ENCODE measurements at regions of chr12 and their contacts with region 1.

Region 1: DNA sequence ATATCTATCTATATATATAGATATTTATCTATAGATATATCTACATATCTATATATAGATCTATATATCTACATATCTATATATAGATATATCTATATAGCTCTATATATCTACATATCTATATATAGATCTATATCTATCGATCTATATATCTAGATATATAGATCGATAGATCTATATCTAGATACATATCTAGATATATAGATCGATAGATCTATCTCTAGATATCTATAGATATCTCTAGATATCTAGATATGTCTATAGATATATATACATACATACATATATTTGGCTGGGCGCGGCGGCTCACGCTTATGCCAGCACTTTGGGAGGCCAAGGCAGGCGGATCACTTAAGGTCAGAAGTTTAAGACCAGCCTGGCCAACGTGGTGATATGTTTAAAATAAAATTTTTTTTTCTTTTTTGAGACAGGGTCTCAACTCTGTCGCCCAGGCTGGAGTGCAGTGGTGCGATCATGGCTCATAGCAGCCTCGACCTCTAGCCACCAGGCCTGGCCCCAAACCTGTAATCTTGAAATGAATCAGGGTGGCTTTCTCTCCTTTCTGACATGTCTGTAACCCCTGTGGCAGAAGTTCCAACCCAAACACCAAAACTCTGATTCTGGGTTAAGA is 18.1 kb downstream of the ARPC3 start:
- DNase-seq: no peak
- ATAC-seq: no peak
- H3K4me3 Mint-ChIP-seq: no peak overlapping the region
- H3K27ac Mint-ChIP-seq: no peak overlapping the region
- H3K4me1 Mint-ChIP-seq: peaks cover 2% of the 10 kb centered on the region
- H3K27me3 Mint-ChIP-seq: no peaks in the 10 kb centered on the region
- CTCF ChIP-seq: no peak

Region 2: DNA sequence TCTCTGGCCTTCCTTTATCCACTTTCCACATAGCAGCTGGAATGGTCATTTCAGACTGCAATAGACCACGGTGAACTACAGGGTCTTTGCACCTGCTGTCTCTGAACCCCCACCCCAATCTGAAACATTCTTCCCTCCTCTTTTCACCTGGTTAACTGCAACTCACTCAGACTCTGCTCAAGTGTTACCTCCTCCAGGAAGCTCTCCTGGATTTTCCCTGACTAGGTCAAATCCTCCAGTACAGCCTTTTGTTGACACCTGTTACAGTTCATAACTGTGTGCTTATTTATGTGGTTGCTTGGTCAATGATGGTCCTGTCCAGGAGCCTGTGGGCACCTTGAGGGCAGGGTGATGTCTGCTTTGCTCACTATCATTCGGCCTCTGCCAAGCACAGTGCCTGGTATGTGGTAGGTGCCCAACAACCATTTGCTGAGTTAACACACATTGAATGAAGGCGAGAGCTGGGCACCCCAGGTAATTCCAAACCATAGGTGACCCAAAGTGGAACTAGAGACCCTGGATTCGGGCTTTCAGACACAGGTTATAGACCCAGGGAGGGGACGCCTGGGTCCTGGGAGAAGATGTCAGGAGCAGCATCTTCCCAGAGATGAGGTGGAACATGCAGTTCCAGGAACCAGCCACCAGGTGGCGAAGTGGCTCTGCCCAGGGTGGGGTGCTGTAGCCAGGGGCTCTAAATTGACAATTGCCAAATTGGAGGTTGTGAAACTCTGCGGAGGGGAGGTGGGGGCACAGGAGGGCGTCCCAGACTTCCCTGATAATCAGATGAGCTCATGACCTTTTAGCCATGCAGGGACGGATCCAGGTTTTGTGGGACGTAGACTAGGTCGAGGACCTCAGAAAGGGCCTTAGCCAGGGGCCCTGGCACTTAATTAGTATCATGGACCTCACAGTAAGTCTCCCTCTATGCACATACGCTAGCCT is 627.0 kb before region 1 on chr12:
- CTCF ChIA-PET with region 1: no interaction called
- POLR2A ChIA-PET with region 1: no interaction called
- intact Hi-C with region 1: loop called (anchors 1 kb)
- DNase-seq: peak; percentile 62
- ATAC-seq: peak; percentile 84
- H3K4me3 Mint-ChIP-seq: no peak overlapping the region
- H3K27ac Mint-ChIP-seq: no peak overlapping the region
- H3K4me1 Mint-ChIP-seq: peaks cover 2% of the 10 kb centered on the region
- H3K27me3 Mint-ChIP-seq: peaks cover 3% of the 10 kb centered on the region
- CTCF ChIP-seq: peak; percentile 88

Region 3: GRCh38 chr12:109858764-109859163 is 573.3 kb before region 1 on chr12:
- CTCF ChIA-PET with region 1: no interaction called
- POLR2A ChIA-PET with region 1: interaction called, 5 read pairs
- intact Hi-C with region 1: loop called (anchors 1 kb)
- DNase-seq: no peak
- ATAC-seq: no peak
- H3K4me3 Mint-ChIP-seq: no peak overlapping the region
- H3K27ac Mint-ChIP-seq: no peak overlapping the region
- H3K4me1 Mint-ChIP-seq: peaks cover 4% of the 10 kb centered on the region
- H3K27me3 Mint-ChIP-seq: no peaks in the 10 kb centered on the region
- CTCF ChIP-seq: no peak

Region 4: DNA sequence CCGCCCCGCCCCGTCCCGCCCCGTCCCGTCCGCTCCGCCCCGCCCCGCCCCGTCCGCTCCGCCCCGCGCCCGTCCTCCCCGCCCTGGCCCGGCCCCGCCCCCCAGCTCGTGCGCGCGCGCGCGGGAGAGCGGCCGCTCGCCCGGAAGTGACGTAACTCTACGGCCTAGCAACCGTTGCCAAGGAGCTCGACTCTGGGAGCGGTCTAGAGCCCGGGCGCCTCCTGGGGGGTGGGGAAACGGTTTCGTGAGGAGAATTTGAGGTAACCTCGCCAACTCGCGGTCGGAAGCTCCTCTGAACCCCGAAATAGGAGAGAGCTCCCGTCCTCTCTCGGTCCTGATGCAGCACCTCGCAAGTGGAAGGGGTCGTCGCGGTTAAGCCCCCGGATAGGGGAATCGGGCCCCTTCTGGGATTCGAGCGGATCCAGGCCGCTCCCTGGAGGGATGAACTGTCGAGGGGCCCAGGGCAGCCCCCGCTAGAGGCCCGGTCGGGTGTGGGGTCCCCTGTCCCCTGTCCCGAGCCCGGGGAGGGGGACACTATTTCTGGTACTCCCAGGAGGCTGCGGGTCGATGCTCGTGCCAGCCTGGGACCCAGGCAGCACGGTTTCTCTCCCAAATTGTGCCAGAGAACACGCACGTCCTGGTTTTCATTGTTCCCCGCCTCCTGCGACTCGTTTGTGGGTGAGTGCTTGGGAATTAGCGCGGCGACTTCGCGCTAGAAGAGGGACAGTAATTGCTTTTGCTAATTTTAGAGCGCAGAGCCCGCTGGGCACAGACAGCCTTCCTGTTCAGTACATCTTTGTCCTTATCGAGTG is 307.7 kb before region 1 on chr12 and contains the start of gene IFT81:
- CTCF ChIA-PET with region 1: interaction called, 3 read pairs
- POLR2A ChIA-PET with region 1: interaction called, 5 read pairs
- intact Hi-C with region 1: loop called (anchors 1 kb)
- DNase-seq: peak; percentile 95
- ATAC-seq: peak; percentile 91
- H3K4me3 Mint-ChIP-seq: peak within 1 kb of the TSS; percentile 92
- H3K27ac Mint-ChIP-seq: peak within 1 kb of the TSS; percentile 79
- H3K4me1 Mint-ChIP-seq: peaks cover 8% of the 10 kb centered on the region
- H3K27me3 Mint-ChIP-seq: no peaks in the 10 kb centered on the region
- CTCF ChIP-seq: no peak
- total RNA-seq, gene IFT81: 4.3 and 4.4 TPM in 2 replicates

Region 5: GRCh38 chr12:110270125-110270962 is 161.7 kb before region 1 on chr12:
- CTCF ChIA-PET with region 1: no interaction called
- POLR2A ChIA-PET with region 1: no interaction called
- intact Hi-C with region 1: no loop called
- DNase-seq: no peak
- ATAC-seq: no peak
- H3K4me3 Mint-ChIP-seq: no peak overlapping the region
- H3K27ac Mint-ChIP-seq: no peak overlapping the region
- H3K4me1 Mint-ChIP-seq: no peaks in the 10 kb centered on the region
- H3K27me3 Mint-ChIP-seq: peaks cover 21% of the 10 kb centered on the region
- CTCF ChIP-seq: no peak

Region 6: DNA sequence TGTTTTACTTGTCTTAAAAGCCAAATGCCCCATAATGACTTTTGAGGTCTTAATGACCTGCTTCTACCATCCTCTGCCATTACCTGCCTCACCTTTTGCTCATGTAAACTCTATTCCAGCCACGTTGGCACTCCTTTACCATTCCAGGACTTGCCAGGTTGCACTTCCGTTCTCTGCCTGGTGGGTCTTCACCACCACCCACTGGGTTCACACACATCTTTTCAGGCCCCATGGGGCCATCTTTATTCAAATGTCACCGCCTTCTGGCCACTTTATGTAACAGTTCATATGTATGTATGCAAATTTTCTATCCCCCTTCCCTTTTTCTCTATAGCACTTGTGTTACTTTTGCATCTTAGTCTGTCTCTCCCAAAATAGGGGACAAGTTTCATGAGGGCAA is 93.3 kb before region 1 on chr12:
- CTCF ChIA-PET with region 1: no interaction called
- POLR2A ChIA-PET with region 1: no interaction called
- intact Hi-C with region 1: no loop called
- DNase-seq: no peak
- ATAC-seq: peak; percentile 79
- H3K4me3 Mint-ChIP-seq: no peak overlapping the region
- H3K27ac Mint-ChIP-seq: no peak overlapping the region
- H3K4me1 Mint-ChIP-seq: peaks cover 16% of the 10 kb centered on the region
- H3K27me3 Mint-ChIP-seq: no peaks in the 10 kb centered on the region
- CTCF ChIP-seq: no peak

Region 7: GRCh38 chr12:110349531-110350151 is 82.4 kb before region 1 on chr12:
- CTCF ChIA-PET with region 1: interaction called, 19 read pairs
- POLR2A ChIA-PET with region 1: interaction called, 6 read pairs
- intact Hi-C with region 1: no loop called
- DNase-seq: no peak
- ATAC-seq: peak; percentile 86
- H3K4me3 Mint-ChIP-seq: no peak overlapping the region
- H3K27ac Mint-ChIP-seq: peak overlapping the region; percentile 26
- H3K4me1 Mint-ChIP-seq: peaks cover 19% of the 10 kb centered on the region
- H3K27me3 Mint-ChIP-seq: no peaks in the 10 kb centered on the region
- CTCF ChIP-seq: no peak

Region 8: GRCh38 chr12:110355073-110355472 is 77.0 kb before region 1 on chr12:
- CTCF ChIA-PET with region 1: interaction called, 19 read pairs
- POLR2A ChIA-PET with region 1: interaction called, 6 read pairs
- intact Hi-C with region 1: loop called (anchors 1 kb)
- DNase-seq: no peak
- ATAC-seq: peak; percentile 54
- H3K4me3 Mint-ChIP-seq: no peak overlapping the region
- H3K27ac Mint-ChIP-seq: no peak overlapping the region
- H3K4me1 Mint-ChIP-seq: peaks cover 14% of the 10 kb centered on the region
- H3K27me3 Mint-ChIP-seq: no peaks in the 10 kb centered on the region
- CTCF ChIP-seq: no peak

Region 9: GRCh38 chr12:110403146-110403975 is 28.7 kb before region 1 on chr12 and contains the start of gene ANAPC7:
- CTCF ChIA-PET with region 1: interaction called, 8 read pairs
- POLR2A ChIA-PET with region 1: interaction called, 19 read pairs
- intact Hi-C with region 1: loop called (anchors 1 kb)
- DNase-seq: peak; percentile 73
- ATAC-seq: peak; percentile 94
- H3K4me3 Mint-ChIP-seq: peak within 1 kb of the TSS; percentile 99
- H3K27ac Mint-ChIP-seq: peak within 1 kb of the TSS; percentile 99
- H3K4me1 Mint-ChIP-seq: peaks cover 33% of the 10 kb centered on the region
- H3K27me3 Mint-ChIP-seq: no peaks in the 10 kb centered on the region
- CTCF ChIP-seq: no peak
- total RNA-seq, gene ANAPC7: 69.8 and 76.2 TPM in 2 replicates